ENCODE measurements at regions of chr14 and their contacts with region 1.

Region 1: GRCh38 chr14:104985675-104986525 is at the start of gene CLBA1:
- DNase-seq: peak; percentile 100
- CTCF ChIP-seq: no peak

Region 2: GRCh38 chr14:104924421-104925213 is 61.3 kb before region 1 on chr14 and contains the start of gene PLD4:
- in situ Hi-C with region 1: no loop called
- DNase-seq: no peak
- CTCF ChIP-seq: no peak

Region 3: GRCh38 chr14:105034314-105035039 is 48.6 kb after region 1 on chr14:
- in situ Hi-C with region 1: loop called (anchors 10 kb)
- DNase-seq: no peak
- CTCF ChIP-seq: no peak

Region 4: GRCh38 chr14:106452426-106452825 is 1466.5 kb after region 1 on chr14:
- in situ Hi-C with region 1: no loop called
- DNase-seq: no peak
- CTCF ChIP-seq: no peak

Measured in GM13976 (cell line).